ENCODE measurements at regions of chr22 and their contacts with region 1.

Region 1: GRCh38 chr22:24189249-24190158 is 8.2 kb downstream of the SUSD2 start:
- DNase-seq: peak; percentile 60
- H3K4me3 ChIP-seq: peak overlapping the region in 1 of 3 experiments; percentile 11
- H3K27ac ChIP-seq: no peak overlapping the region
- H3K4me1 ChIP-seq: peaks cover 25% of the 10 kb centered on the region
- H3K27me3 ChIP-seq: no peaks in the 10 kb centered on the region
- CTCF ChIP-seq: peak; percentile 88 to 94

Region 2: GRCh38 chr22:23893943-23894709 is 295.4 kb before region 1 on chr22 and contains the start of gene MIF:
- CTCF ChIA-PET with region 1: no interaction called
- dilution Hi-C with region 1: no loop called
- in situ Hi-C with region 1: no loop called
- intact Hi-C with region 1: loop called (anchors 10 kb)
- DNase-seq: peak; percentile 95
- H3K4me3 ChIP-seq: peak within 1 kb of the TSS; percentile 79 to 93 (median 91)
- H3K27ac ChIP-seq: peak within 1 kb of the TSS; percentile 86
- H3K4me1 ChIP-seq: peaks cover 21% of the 10 kb centered on the region
- H3K27me3 ChIP-seq: no peaks in the 10 kb centered on the region
- CTCF ChIP-seq: peak; percentile 69 to 83
- total RNA-seq, gene MIF: 359 to 1,214 TPM

Region 3: DNA sequence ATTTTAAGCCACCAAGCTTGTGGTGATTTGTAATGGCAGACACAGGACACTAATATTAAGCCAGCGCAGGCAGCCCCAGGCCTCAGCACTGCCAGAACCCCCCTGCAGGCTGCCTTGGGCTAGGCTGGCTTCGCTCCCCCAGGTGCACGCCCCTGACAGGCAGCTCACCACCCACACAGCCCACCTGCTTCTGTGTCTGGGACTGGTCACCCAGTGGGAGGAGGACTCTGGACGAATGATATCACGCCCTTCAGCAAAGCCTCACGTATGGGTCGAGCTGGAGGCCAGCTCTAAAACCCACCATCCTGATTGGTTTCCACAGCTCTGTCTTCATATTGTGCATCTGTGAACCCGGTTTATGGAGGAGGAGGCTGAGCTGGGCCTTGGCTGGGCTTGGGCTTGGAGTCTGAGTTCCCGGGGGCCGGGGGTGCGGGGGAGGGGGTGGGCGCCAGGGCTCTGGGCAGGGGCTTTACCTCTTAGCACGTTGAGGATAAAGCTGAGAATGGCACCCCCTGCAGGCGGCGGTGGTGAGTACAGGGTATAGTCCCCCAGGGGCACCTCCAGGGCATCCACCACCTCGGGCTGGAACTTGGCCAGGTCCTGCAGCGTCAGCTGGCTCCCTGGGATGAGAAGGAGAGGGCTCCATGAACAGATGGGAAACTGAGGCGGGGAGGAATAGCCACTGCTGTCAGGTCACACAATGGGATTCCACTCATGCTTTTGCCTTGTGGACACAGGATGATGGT is 41.6 kb after region 1 on chr22:
- CTCF ChIA-PET with region 1: interaction called, 3 read pairs
- dilution Hi-C with region 1: no loop called
- in situ Hi-C with region 1: no loop called
- intact Hi-C with region 1: loop called (anchors 1 kb)
- DNase-seq: no peak
- H3K4me3 ChIP-seq: no peak overlapping the region
- H3K27ac ChIP-seq: no peak overlapping the region
- H3K4me1 ChIP-seq: no peaks in the 10 kb centered on the region
- H3K27me3 ChIP-seq: no peaks in the 10 kb centered on the region
- CTCF ChIP-seq: peak; percentile 7 to 22

Region 4: DNA sequence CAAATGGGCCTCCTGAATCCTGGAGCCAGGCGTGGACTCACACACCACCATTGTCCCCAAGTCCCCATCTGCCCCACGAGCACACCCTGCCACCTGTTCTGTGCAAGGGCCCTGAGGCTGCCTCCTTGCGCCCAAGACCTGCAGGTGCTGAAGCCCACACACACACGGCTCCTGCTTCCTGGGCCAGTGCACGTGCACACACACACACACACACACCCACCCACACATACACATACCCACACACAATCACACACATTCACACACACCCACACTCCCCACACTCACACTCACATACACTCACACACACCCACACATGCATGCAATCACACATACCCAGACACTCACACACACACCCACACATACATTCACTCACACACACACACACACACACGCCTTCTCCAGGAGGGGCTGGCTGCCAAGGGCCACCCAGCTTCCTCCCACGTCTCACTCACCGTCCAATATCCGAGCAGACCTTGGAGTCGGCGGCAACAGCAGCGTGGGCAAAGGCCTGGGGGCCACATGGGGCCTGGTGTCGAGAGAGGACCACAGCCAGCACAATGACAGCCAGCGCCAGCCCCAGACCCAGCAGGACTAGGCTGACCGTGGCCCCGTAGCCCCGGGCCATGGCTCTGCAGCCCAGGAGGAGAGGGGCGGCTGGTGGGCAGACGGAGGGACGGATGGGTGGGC is 54.7 kb after region 1 on chr22:
- CTCF ChIA-PET with region 1: interaction called, 17 read pairs
- dilution Hi-C with region 1: no loop called
- in situ Hi-C with region 1: loop called (anchors 10 kb)
- intact Hi-C with region 1: loop called (anchors 1 kb)
- DNase-seq: no peak
- H3K4me3 ChIP-seq: no peak overlapping the region
- H3K27ac ChIP-seq: no peak overlapping the region
- H3K4me1 ChIP-seq: peaks cover 21% of the 10 kb centered on the region
- H3K27me3 ChIP-seq: no peaks in the 10 kb centered on the region
- CTCF ChIP-seq: no peak

Measured in mammary epithelial cell (primary cell).